ENCODE measurements at regions of chr1 and their contacts with region 1.

Region 1: DNA sequence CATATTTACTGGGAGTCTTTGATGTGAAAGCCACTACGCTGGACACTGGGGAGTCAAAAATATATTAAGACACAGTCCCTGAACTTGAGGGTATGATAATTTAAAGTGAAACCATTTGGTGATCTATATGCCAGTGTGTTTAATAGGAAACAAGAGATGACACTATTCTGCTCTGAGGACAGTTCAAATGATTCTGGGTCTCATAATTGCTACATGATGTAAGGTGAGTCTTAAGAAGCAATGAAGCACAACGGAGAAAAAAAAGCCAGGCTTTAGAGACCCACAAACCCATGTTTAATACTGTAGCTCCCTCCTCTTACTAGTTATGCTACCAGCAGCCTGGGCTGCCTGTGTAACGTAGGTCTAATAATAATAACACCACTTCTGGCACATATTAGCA is 14.2 kb upstream of the LRRC8D start:
- DNase-seq: no peak
- H3K4me3 ChIP-seq: no peak overlapping the region
- CTCF ChIP-seq: no peak
- POLR2A ChIP-seq: no peak

Region 2: GRCh38 chr1:89050338-89051033 is 756.1 kb before region 1 on chr1:
- intact Hi-C with region 1: no loop called
- DNase-seq: peak in 1 of 2 donors; percentile 71
- H3K4me3 ChIP-seq: no peak overlapping the region
- CTCF ChIP-seq: no peak
- POLR2A ChIP-seq: no peak

Region 3: GRCh38 chr1:89243046-89243445 is 563.6 kb before region 1 on chr1:
- intact Hi-C with region 1: no loop called
- DNase-seq: no peak
- H3K4me3 ChIP-seq: no peak overlapping the region
- CTCF ChIP-seq: no peak
- POLR2A ChIP-seq: no peak

Region 4: GRCh38 chr1:89987170-89987819 is 180.7 kb after region 1 on chr1:
- intact Hi-C with region 1: loop called (anchors 2 kb)
- DNase-seq: peak in 1 of 2 donors; percentile 68
- H3K4me3 ChIP-seq: no peak overlapping the region
- CTCF ChIP-seq: peak in 1 of 3 donors; percentile 35
- POLR2A ChIP-seq: no peak

Measured in lower leg skin (tissue), 4 donors.